Activated CD8-positive, alpha-beta T cell treated with anti-CD3 and anti-CD28 coated beads, Interleukin-2, amount 10 ng/mL, durations not matched to agents 7 days and 5 days (primary cell): ENCODE measurements at regions of chr10 and their contacts with region 1.

Region 1: GRCh38 chr10:89029785-89030437 is 39.3 kb downstream of the FAS start:
- DNase-seq: peak; percentile 85
- ATAC-seq: peak; percentile 75
- H3K4me3 Mint-ChIP-seq: no peak overlapping the region
- H3K27ac Mint-ChIP-seq: no peak overlapping the region
- H3K4me1 Mint-ChIP-seq: peaks cover 15% of the 10 kb centered on the region
- H3K27me3 Mint-ChIP-seq: no peaks in the 10 kb centered on the region

Region 2: DNA sequence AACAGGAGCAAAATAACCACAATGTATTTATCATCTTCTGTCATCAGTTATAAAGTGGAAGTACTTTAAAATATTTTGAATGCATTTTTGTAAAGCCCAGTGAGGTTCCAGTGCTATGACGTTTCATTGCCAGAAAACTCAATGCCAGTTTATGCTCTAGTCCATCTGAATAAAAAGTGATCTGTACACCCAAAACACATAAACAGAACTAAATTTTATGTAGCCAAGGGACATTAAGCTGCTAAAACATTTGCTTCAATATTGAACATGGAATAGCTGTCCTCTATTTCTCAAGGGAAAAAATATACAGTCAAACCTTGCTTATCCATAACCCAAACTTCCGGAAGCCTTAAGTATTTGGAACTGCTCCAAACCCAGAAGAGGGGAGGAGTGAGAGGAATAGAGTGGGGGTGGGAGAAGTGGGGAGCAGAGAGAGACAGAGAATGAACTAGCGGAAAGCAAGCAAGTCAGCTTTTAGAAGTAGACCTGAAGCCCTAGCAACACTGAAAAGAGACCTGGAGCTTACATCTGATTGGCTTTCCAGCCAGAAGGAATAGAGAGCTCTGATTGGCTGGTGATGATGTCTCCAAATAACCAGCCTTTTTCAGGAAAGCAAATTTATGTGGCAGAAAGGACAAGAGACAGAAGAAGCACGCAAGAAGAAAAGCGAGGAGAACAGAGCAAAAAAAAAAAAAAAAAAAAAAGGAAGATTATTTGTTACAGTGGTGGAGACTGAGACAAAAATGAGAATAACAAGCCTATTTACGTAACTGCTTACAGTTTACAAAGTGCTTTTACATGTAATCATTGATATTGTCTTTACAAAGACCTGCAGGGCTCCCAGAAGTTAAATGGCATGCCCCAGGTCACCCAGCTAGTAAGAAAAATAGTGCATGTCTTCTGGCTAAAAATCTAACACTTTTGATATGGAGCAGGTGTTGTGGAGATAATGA is 642.8 kb before region 1 on chr10:
- CTCF ChIA-PET with region 1: no interaction called
- POLR2A ChIA-PET with region 1: no interaction called
- DNase-seq: no peak
- ATAC-seq: no peak
- H3K4me3 Mint-ChIP-seq: no peak overlapping the region
- H3K27ac Mint-ChIP-seq: no peak overlapping the region
- H3K4me1 Mint-ChIP-seq: peaks cover 19% of the 10 kb centered on the region
- H3K27me3 Mint-ChIP-seq: no peaks in the 10 kb centered on the region

Region 3: GRCh38 chr10:88990384-88991160 is 39.3 kb before region 1 on chr10 and contains the start of gene FAS:
- CTCF ChIA-PET with region 1: interaction called, 22 read pairs
- POLR2A ChIA-PET with region 1: interaction called, 3 read pairs
- DNase-seq: peak; percentile 88
- ATAC-seq: peak; percentile 80
- H3K4me3 Mint-ChIP-seq: peak within 1 kb of the TSS; percentile 95
- H3K27ac Mint-ChIP-seq: peak within 1 kb of the TSS; percentile 95
- H3K4me1 Mint-ChIP-seq: peaks cover 71% of the 10 kb centered on the region
- H3K27me3 Mint-ChIP-seq: no peaks in the 10 kb centered on the region
- total RNA-seq, gene FAS: 58.5 to 62.6 TPM

Region 4: GRCh38 chr10:89007129-89007893 is 22.6 kb before region 1 on chr10:
- CTCF ChIA-PET with region 1: interaction called, 20 read pairs
- POLR2A ChIA-PET with region 1: no interaction called
- DNase-seq: no peak
- ATAC-seq: no peak
- H3K4me3 Mint-ChIP-seq: no peak overlapping the region
- H3K27ac Mint-ChIP-seq: no peak overlapping the region
- H3K4me1 Mint-ChIP-seq: peaks cover 19% of the 10 kb centered on the region
- H3K27me3 Mint-ChIP-seq: no peaks in the 10 kb centered on the region

Region 5: DNA sequence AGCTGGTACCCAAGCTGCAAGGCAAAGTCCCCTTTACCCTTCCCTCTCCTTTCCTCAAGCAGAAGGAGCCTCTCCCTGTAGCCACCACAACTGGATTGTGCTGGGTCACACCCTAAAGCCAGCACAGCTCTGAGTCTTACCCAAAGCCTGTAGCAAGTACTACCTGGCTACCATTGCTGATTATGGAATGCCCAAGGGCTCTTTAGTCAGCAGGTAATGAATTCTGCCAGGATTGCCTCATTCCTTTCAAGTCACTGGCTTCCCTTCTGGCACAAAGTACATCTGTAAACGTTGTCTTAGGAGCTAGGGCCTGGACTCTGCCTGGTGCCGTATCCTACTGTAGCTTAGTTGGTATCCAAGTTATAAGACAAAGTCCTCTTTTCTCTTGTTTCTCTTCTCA is 12.7 kb after region 1 on chr10:
- CTCF ChIA-PET with region 1: interaction called, 10 read pairs
- POLR2A ChIA-PET with region 1: no interaction called
- DNase-seq: no peak
- ATAC-seq: no peak
- H3K4me3 Mint-ChIP-seq: no peak overlapping the region
- H3K27ac Mint-ChIP-seq: no peak overlapping the region
- H3K4me1 Mint-ChIP-seq: no peaks in the 10 kb centered on the region
- H3K27me3 Mint-ChIP-seq: no peaks in the 10 kb centered on the region

Region 6: DNA sequence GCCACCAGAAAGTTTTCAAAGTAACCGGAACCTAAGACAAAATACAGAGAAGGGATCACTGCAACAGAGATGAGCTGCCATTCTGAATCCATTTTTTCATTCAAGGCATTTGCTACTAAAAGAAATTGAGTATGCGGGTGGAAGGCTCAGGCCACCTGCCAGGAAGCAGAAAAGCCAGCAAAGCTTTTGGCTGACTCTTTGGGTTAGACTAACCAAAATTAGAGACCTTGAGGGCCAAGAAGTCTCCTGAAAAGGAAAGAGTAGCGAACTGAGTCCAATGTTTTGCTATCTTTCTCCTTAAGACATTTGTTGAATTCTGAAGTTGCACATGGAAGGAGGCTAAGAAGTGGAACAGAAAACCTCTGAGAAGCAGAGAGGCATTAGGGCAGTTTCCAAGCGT is 39.7 kb after region 1 on chr10:
- CTCF ChIA-PET with region 1: interaction called, 21 read pairs
- POLR2A ChIA-PET with region 1: no interaction called
- DNase-seq: no peak
- ATAC-seq: no peak
- H3K4me3 Mint-ChIP-seq: no peak overlapping the region
- H3K27ac Mint-ChIP-seq: no peak overlapping the region
- H3K4me1 Mint-ChIP-seq: peaks cover 8% of the 10 kb centered on the region
- H3K27me3 Mint-ChIP-seq: peaks cover 34% of the 10 kb centered on the region

Region 7: GRCh38 chr10:89201345-89202032 is 171.6 kb after region 1 on chr10:
- CTCF ChIA-PET with region 1: interaction called, 73 read pairs
- POLR2A ChIA-PET with region 1: no interaction called
- DNase-seq: no peak
- ATAC-seq: no peak
- H3K4me3 Mint-ChIP-seq: no peak overlapping the region
- H3K27ac Mint-ChIP-seq: no peak overlapping the region
- H3K4me1 Mint-ChIP-seq: peaks cover 3% of the 10 kb centered on the region
- H3K27me3 Mint-ChIP-seq: peaks cover 16% of the 10 kb centered on the region

Region 8: DNA sequence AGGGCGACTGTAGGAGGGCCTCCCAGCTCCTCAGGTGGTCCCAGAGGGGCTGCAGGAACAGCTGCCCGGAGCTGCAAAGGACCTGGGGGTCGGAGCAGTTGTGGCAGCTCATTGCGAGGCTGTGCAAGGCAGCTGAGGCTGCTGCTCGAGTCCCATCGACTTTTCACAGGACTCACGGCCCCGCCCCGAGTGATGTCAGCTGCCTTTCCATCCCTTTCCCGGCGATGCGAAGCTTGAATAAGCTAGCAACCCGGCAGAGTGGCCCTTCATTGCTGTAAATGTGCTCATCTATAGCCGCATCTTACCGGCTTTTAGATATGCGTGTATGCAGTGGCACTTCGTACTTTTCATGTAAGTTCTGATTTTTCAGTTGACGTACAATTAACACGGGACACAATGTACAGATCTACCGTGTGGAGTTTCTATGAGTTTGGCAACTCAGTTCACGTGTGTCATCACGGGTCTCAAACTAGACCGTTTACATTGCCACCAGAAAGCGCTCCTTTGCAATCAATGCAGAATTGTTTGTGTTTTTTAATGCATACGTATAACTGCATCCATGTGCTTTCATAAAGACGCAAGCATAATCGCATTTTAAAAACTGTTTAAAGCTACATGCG is 177.4 kb after region 1 on chr10 and contains the start of gene CH25H:
- CTCF ChIA-PET with region 1: interaction called, 73 read pairs
- POLR2A ChIA-PET with region 1: interaction called, 7 read pairs
- DNase-seq: peak; percentile 53
- ATAC-seq: peak; percentile 76
- H3K4me3 Mint-ChIP-seq: peak within 1 kb of the TSS; percentile 65
- H3K27ac Mint-ChIP-seq: peak within 1 kb of the TSS; percentile 32
- H3K4me1 Mint-ChIP-seq: peaks cover 23% of the 10 kb centered on the region
- H3K27me3 Mint-ChIP-seq: peaks cover 38% of the 10 kb centered on the region
- total RNA-seq, gene CH25H: not detected